Left lung (tissue), 14 donors: ENCODE measurements at regions of chr4 and their contacts with region 1.

Region 1: DNA sequence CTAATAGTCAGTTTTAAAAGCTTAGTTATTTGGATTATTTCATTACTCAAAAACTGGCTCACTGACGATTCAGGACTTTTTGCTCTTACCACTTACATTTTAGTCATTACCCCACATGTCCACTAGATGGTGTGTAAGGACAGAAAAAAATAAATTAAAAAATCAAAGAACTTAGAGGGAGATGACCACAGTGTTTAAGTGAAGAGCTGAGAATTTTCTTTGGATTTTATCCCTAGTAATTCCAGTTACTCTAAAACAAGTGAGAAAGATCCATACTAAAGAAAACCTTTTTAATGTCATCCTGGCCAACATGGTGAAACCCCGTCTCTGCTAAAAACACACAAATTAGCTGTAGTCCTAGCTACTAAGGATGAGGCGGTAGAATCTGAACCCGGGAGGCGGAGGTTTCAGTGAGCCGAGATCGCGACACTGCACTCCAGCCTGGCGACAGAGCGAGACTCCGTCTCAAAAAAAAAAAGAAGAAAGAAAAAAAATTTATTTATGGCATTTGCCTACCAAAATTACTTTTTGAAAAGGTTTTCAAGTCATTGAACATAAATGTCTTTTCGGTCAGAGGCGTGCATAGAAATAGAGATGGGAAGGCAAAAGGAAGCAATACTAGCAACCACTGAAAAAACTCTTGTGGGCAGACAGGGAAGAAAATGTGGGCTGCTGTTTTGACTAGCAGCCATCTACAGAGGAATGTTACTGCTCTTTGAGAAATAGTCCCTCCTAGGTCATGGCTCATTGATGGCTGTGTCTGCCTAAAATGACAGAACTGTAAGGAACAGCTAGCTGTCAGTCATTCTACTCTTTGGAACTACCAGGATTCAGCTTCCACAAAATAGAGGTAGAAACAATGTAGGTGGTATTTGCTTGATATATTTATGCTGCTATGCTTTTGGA is 26.6 kb upstream of the TMPRSS11B start:
- DNase-seq: peak in 2 of 4 donors; percentile 50 to 64
- ATAC-seq: peak; percentile 93
- H3K4me3 ChIP-seq: no peak overlapping the region
- H3K27ac ChIP-seq: no peak overlapping the region
- H3K4me1 ChIP-seq: no peaks in the 10 kb centered on the region
- H3K27me3 ChIP-seq: no peaks in the 10 kb centered on the region
- CTCF ChIP-seq: peak; percentile 65 to 76

Region 2: GRCh38 chr4:68375667-68376559 is 103.8 kb after region 1 on chr4:
- intact Hi-C with region 1: loop called in 1 of 2 experiments (anchors 5 kb)
- DNase-seq: peak in 1 of 4 donors; percentile 39
- ATAC-seq: peak; percentile 88
- H3K4me3 ChIP-seq: no peak overlapping the region
- H3K27ac ChIP-seq: no peak overlapping the region
- H3K4me1 ChIP-seq: peaks cover 0 to 3% of the 10 kb centered on the region in 2 donors
- H3K27me3 ChIP-seq: peaks cover 7 to 25% of the 10 kb centered on the region in 2 donors
- CTCF ChIP-seq: peak; percentile 65 to 68

Region 3: DNA sequence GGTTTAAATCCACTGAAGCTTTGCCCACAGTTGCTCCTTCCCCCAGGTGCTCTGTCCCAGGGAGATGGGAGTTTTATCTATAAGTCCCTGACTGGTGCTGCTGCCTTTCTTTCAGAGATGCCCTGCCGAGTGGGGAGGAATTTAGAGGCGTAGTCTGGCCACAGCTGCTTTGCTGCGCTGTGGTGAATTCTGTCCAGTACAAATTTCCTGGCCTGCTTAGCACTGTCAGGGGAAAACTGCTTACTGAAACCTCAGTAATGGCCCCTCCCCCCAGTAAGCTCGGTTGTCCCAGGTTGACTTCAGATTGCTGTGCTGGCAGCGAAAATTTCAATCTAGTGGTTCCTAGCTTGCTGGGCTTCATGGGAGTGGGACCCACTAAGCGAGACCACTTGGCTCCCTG is 263.9 kb after region 1 on chr4:
- intact Hi-C with region 1: no loop called
- DNase-seq: peak in 1 of 4 donors; percentile 13
- ATAC-seq: no peak
- H3K4me3 ChIP-seq: no peak overlapping the region
- H3K27ac ChIP-seq: no peak overlapping the region
- H3K4me1 ChIP-seq: no peaks in the 10 kb centered on the region
- H3K27me3 ChIP-seq: no peaks in the 10 kb centered on the region
- CTCF ChIP-seq: no peak

Region 4: GRCh38 chr4:68599150-68599549 is 327.0 kb after region 1 on chr4:
- intact Hi-C with region 1: no loop called
- DNase-seq: no peak
- ATAC-seq: no peak
- H3K4me3 ChIP-seq: no peak overlapping the region
- H3K27ac ChIP-seq: no peak overlapping the region
- H3K4me1 ChIP-seq: no peaks in the 10 kb centered on the region
- H3K27me3 ChIP-seq: no peaks in the 10 kb centered on the region
- CTCF ChIP-seq: no peak